ENCODE measurements at regions of chr10 and their contacts with region 1.

Region 1: GRCh38 chr10:129380279-129380678 is 86.8 kb upstream of the MGMT start:
- DNase-seq: no peak
- H3K4me3 ChIP-seq: no peak overlapping the region
- H3K27ac ChIP-seq: no peak overlapping the region
- H3K4me1 ChIP-seq: no peaks in the 10 kb centered on the region
- H3K27me3 ChIP-seq: no peaks in the 10 kb centered on the region
- CTCF ChIP-seq: no peak
- EP300 ChIP-seq: no peak
- POLR2A ChIP-seq: no peak

Region 2: GRCh38 chr10:129353096-129353495 is 27.2 kb before region 1 on chr10:
- intact Hi-C with region 1: loop called in 1 of 4 experiments (anchors 1 kb)
- DNase-seq: no peak
- H3K4me3 ChIP-seq: no peak overlapping the region
- H3K27ac ChIP-seq: no peak overlapping the region
- H3K4me1 ChIP-seq: no peaks in the 10 kb centered on the region
- H3K27me3 ChIP-seq: no peaks in the 10 kb centered on the region
- CTCF ChIP-seq: no peak
- EP300 ChIP-seq: no peak
- POLR2A ChIP-seq: no peak

Region 3: GRCh38 chr10:129658376-129659074 is 278.2 kb after region 1 on chr10:
- intact Hi-C with region 1: no loop called
- DNase-seq: no peak
- H3K4me3 ChIP-seq: no peak overlapping the region
- H3K27ac ChIP-seq: no peak overlapping the region
- H3K4me1 ChIP-seq: no peaks in the 10 kb centered on the region
- H3K27me3 ChIP-seq: no peaks in the 10 kb centered on the region
- CTCF ChIP-seq: no peak
- EP300 ChIP-seq: no peak
- POLR2A ChIP-seq: no peak

Measured in ovary (tissue), 10 donors.